ENCODE measurements at regions of chr6 and their contacts with region 1.

Region 1: GRCh38 chr6:161370880-161371279 is 97.0 kb upstream of the AGPAT4 start:
- DNase-seq: peak; percentile 16
- ATAC-seq: peak; percentile 93
- H3K4me3 ChIP-seq: no peak overlapping the region
- H3K27ac ChIP-seq: no peak overlapping the region
- H3K4me1 ChIP-seq: no peaks in the 10 kb centered on the region
- H3K27me3 ChIP-seq: no peaks in the 10 kb centered on the region
- CTCF ChIP-seq: peak; percentile 90 to 98 (median 96)
- EP300 ChIP-seq: no peak
- POLR2A ChIP-seq: no peak
- RAD21 ChIP-seq: peak; percentile 98

Region 2: DNA sequence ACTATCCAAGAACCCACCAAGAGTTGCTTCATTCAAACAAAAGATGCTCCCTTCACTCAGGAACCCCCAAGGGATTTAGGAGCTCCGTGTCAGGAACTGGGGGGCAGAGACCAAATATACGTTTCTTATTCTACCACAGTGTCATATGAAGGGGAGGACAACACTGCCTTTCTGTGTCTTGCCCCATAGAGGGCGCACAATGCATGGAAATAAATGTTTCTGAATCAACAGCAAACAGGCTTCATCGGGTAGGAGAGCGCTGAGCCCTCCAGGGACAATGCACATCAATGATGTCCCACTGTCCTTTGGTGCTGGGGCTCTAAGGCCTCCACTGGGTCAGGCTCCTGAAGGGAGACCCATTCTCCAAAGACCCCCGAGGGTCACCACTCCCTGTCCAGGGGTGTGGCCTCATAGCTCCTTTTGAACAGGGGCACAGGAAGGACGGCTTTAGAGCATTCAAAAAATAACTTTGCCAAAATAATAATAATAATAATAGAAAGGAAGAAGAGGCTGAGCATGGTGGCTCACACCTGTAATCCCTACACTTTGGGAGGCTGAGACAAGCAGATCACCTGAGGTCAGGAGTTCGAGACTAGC is 637.7 kb before region 1 on chr6:
- CTCF ChIA-PET with region 1: interaction called, 73 read pairs
- POLR2A ChIA-PET with region 1: no interaction called
- RAD21 ChIA-PET with region 1: interaction called, 12 read pairs
- SMC1A ChIA-PET with region 1: interaction called, 8 read pairs
- in situ Hi-C with region 1: no loop called
- intact Hi-C with region 1: loop called (anchors 1 kb)
- DNase-seq: no peak
- ATAC-seq: peak; percentile 89
- H3K4me3 ChIP-seq: no peak overlapping the region
- H3K27ac ChIP-seq: no peak overlapping the region
- H3K4me1 ChIP-seq: peaks cover 26% of the 10 kb centered on the region
- H3K27me3 ChIP-seq: no peaks in the 10 kb centered on the region
- CTCF ChIP-seq: peak; percentile 69 to 87 (median 72)
- EP300 ChIP-seq: no peak
- POLR2A ChIP-seq: no peak
- RAD21 ChIP-seq: peak; percentile 91

Region 3: GRCh38 chr6:160919723-160920440 is 451.0 kb before region 1 on chr6:
- CTCF ChIA-PET with region 1: interaction called, 12 read pairs
- POLR2A ChIA-PET with region 1: no interaction called
- RAD21 ChIA-PET with region 1: interaction called, 11 read pairs
- SMC1A ChIA-PET with region 1: interaction called, 209 read pairs
- in situ Hi-C with region 1: no loop called
- intact Hi-C with region 1: no loop called
- DNase-seq: no peak
- ATAC-seq: no peak
- H3K4me3 ChIP-seq: no peak overlapping the region
- H3K27ac ChIP-seq: no peak overlapping the region
- H3K4me1 ChIP-seq: no peaks in the 10 kb centered on the region
- H3K27me3 ChIP-seq: no peaks in the 10 kb centered on the region
- CTCF ChIP-seq: no peak
- EP300 ChIP-seq: no peak
- POLR2A ChIP-seq: no peak
- RAD21 ChIP-seq: no peak

Region 4: DNA sequence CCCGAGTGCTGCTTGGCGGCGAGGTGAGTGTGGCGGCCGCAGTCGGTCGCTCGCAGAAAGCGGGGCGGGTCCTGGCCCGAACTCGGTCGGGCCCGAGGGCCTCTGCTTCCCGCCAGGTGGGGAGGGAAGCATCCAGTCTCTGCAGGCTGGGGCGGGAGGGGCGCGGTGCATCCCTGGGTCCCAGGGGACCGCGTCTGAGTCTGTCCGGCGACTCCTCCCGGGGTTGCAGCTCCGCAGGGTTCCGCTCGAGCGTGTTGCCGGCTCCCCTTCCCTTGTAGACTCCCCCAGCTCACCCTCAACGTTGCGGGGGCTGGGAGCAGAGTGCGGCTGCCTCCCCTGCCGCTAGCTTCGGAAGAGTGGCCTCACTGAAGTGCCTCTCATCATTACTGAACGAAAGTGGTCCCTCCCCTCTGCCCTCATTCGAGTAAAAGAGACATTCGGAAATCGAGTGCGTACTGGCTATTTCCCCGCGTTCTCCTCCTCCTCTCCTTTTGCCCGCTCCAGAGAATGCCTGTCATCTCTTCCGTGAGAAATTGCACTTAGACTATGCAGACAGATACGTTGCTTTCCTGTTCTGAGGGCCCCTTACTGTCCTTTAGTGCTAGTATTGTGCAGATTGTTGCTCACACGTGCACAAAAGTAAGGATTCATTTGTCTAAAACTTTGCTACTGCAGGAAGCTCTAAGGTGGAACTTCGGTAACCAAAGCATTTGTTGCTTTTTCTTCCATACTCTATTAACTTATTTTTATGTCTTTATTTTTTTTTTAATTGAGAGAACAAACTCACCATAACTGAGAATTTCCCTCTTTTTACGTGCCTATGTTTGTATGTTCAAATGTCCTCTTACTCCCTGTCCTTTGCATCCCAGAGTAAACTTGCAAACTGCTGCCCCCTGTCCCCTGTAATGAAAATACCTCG is 378.6 kb before region 1 on chr6:
- CTCF ChIA-PET with region 1: interaction called, 19 read pairs
- POLR2A ChIA-PET with region 1: no interaction called
- RAD21 ChIA-PET with region 1: interaction called, 3 read pairs
- SMC1A ChIA-PET with region 1: interaction called, 4 read pairs
- in situ Hi-C with region 1: no loop called
- intact Hi-C with region 1: no loop called
- DNase-seq: no peak
- ATAC-seq: peak; percentile 68
- H3K4me3 ChIP-seq: peak overlapping the region; percentile 95
- H3K27ac ChIP-seq: peak overlapping the region; percentile 69
- H3K4me1 ChIP-seq: no peaks in the 10 kb centered on the region; the same call in 1 of the 2 replicates
- H3K27me3 ChIP-seq: no peaks in the 10 kb centered on the region
- CTCF ChIP-seq: peak; percentile 55 to 64 (median 55)
- EP300 ChIP-seq: no peak
- POLR2A ChIP-seq: peak; percentile 26
- RAD21 ChIP-seq: peak; percentile 62

Region 5: DNA sequence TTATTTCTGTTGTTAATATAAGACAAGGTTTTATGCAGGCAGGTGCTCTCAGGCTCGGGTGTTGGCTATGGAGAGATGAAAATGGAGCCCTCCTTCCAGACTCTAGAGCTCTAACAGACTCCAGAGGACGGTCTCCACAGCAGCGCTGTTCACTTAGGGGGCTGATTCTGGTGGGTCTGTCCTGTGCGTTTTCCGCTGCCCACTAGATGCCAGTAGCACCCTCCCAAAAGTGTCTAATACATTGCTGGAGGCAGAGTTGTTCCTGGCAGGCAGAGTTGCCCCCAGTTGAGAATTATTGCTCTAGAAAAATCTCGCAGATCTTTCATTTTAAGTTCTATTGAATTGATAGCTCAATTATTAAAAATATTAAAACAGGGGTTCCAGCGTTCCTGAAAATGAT is 269.4 kb before region 1 on chr6:
- CTCF ChIA-PET with region 1: interaction called, 17 read pairs
- POLR2A ChIA-PET with region 1: no interaction called
- RAD21 ChIA-PET with region 1: interaction called, 3 read pairs
- SMC1A ChIA-PET with region 1: interaction called, 9 read pairs
- in situ Hi-C with region 1: no loop called
- intact Hi-C with region 1: loop called (anchors 5 kb)
- DNase-seq: no peak
- ATAC-seq: no peak
- H3K4me3 ChIP-seq: no peak overlapping the region
- H3K27ac ChIP-seq: no peak overlapping the region
- H3K4me1 ChIP-seq: no peaks in the 10 kb centered on the region
- H3K27me3 ChIP-seq: no peaks in the 10 kb centered on the region
- CTCF ChIP-seq: peak in 2 of 3 experiments; percentile 14; a peak in 1 of 6 replicates
- EP300 ChIP-seq: no peak
- POLR2A ChIP-seq: no peak
- RAD21 ChIP-seq: peak; percentile 30; the same call in 1 of the 2 replicates

Region 6: GRCh38 chr6:161152907-161153662 is 217.8 kb before region 1 on chr6:
- CTCF ChIA-PET with region 1: interaction called, 7 read pairs
- POLR2A ChIA-PET with region 1: no interaction called
- RAD21 ChIA-PET with region 1: no interaction called
- SMC1A ChIA-PET with region 1: interaction called, 4 read pairs
- in situ Hi-C with region 1: loop called (anchors 25 kb)
- intact Hi-C with region 1: loop called (anchors 5 kb)
- DNase-seq: no peak
- ATAC-seq: peak; percentile 28; the same call in 1 of the 3 replicates
- H3K4me3 ChIP-seq: no peak overlapping the region
- H3K27ac ChIP-seq: no peak overlapping the region
- H3K4me1 ChIP-seq: no peaks in the 10 kb centered on the region
- H3K27me3 ChIP-seq: no peaks in the 10 kb centered on the region
- CTCF ChIP-seq: peak in 1 of 3 experiments; percentile 23; a peak in 2 of 6 replicates
- EP300 ChIP-seq: no peak
- POLR2A ChIP-seq: no peak
- RAD21 ChIP-seq: peak; percentile 64

Region 7: GRCh38 chr6:161406646-161407045 is 35.8 kb after region 1 on chr6:
- CTCF ChIA-PET with region 1: no interaction called
- POLR2A ChIA-PET with region 1: no interaction called
- RAD21 ChIA-PET with region 1: no interaction called
- SMC1A ChIA-PET with region 1: no interaction called
- in situ Hi-C with region 1: no loop called
- intact Hi-C with region 1: no loop called
- DNase-seq: no peak
- ATAC-seq: no peak
- H3K4me3 ChIP-seq: no peak overlapping the region
- H3K27ac ChIP-seq: no peak overlapping the region
- H3K4me1 ChIP-seq: no peaks in the 10 kb centered on the region
- H3K27me3 ChIP-seq: no peaks in the 10 kb centered on the region
- CTCF ChIP-seq: no peak
- EP300 ChIP-seq: no peak
- POLR2A ChIP-seq: no peak
- RAD21 ChIP-seq: no peak

Region 8: DNA sequence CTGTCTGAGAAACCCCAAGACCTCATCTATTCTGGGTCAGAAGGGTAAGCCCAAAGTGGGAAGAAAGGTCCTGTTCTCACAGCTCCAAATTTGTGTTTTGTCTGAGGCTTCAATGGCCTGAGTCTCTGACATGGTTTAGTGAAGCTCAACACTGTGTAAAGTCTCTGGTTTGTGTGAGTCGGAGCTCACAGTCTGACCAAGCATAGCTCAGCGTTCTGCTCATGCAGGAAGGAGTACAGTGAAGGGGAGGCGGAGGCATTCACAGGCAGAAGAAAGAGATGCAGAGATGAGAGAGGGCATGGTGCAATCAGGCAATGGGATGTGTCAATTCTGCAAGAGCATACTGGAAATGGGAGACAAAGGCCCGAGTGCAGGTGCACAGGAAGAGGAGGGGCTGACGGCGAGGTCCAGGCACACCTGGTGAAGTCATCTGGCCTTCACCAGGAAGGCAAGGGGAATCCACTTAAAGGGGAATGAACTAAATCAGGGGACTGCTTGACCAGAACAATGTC is 366.0 kb after region 1 on chr6:
- CTCF ChIA-PET with region 1: no interaction called
- POLR2A ChIA-PET with region 1: no interaction called
- RAD21 ChIA-PET with region 1: no interaction called
- SMC1A ChIA-PET with region 1: no interaction called
- in situ Hi-C with region 1: no loop called
- intact Hi-C with region 1: no loop called
- DNase-seq: no peak
- ATAC-seq: no peak
- H3K4me3 ChIP-seq: no peak overlapping the region
- H3K27ac ChIP-seq: no peak overlapping the region
- H3K4me1 ChIP-seq: no peaks in the 10 kb centered on the region
- H3K27me3 ChIP-seq: no peaks in the 10 kb centered on the region
- CTCF ChIP-seq: no peak
- EP300 ChIP-seq: no peak
- POLR2A ChIP-seq: no peak
- RAD21 ChIP-seq: no peak

Measured in GM12878 (cell line).